ENCODE measurements at regions of chr11 and their contacts with region 1.

Region 1: DNA sequence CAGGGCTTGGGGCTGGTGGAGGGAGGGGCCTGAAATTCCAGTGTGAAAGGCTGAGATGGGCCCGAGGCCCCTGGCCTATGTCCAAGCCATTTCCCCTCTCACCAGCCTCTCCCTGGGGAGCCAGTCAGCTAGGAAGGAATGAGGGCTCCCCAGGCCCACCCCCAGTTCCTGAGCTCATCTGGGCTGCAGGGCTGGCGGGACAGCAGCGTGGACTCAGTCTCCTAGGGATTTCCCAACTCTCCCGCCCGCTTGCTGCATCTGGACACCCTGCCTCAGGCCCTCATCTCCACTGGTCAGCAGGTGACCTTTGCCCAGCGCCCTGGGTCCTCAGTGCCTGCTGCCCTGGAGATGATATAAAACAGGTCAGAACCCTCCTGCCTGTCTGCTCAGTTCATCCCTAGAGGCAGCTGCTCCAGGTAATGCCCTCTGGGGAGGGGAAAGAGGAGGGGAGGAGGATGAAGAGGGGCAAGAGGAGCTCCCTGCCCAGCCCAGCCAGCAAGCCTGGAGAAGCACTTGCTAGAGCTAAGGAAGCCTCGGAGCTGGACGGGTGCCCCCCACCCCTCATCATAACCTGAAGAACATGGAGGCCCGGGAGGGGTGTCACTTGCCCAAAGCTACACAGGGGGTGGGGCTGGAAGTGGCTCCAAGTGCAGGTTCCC is at the start of gene APOC3:
- DNase-seq: no peak
- ATAC-seq: peak in 1 of 8 donors; percentile 7
- H3K4me3 ChIP-seq: no peak within 1 kb of the TSS
- H3K27ac ChIP-seq: no peak within 1 kb of the TSS
- H3K4me1 ChIP-seq: peaks cover 0 to 6% (median 2%) of the 10 kb centered on the region in 9 donors
- H3K27me3 ChIP-seq: no peaks in the 10 kb centered on the region
- CTCF ChIP-seq: no peak
- total RNA-seq, gene APOC3: 0.64 TPM in 1 of 10 donors, not detected in the others

Region 2: DNA sequence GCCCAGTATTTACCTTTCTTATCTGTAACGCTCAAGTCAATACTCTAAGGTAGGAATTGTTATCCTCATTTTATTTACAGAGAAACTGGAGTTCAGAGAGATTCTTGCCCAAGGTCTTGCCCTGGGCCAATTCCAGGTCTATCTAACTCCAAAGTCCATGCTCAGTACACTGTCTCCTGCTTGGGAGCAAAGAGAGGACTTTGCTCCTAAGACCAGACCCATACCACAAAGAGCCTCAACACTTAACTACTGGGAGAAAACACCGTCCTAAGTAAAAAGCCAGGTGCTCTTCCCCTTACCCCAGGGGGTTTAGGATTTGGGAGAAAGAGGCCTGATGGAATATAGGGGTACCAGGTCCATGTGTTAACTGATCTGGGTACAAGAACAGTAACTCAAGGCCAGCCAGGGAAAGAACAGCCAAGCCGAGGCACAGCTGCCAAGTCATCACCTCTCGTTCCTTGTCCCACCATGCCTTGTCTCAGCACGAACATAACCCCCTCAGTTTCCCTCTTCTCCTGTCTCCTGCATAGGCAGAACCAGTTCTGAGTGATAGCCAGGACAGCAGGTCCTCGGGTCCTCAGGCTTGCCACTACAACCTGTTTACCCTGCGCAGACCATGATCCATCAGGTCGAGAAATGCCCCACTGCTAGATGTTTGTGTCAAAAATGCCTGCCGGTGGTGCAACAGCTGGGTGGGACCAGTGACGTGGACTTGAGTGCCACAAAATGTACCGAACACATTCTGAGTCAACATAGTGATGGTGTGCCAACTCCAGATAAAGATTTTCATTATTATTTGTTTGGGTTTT is 21.1 kb before region 1 on chr11:
- intact Hi-C with region 1: loop called in 1 of 10 experiments (anchors 1 kb)
- DNase-seq: no peak
- ATAC-seq: peak in 1 of 8 donors; percentile 37
- H3K4me3 ChIP-seq: no peak overlapping the region
- H3K27ac ChIP-seq: no peak overlapping the region
- H3K4me1 ChIP-seq: peaks cover 0 to under 1% (median 0%) of the 10 kb centered on the region in 9 donors
- H3K27me3 ChIP-seq: no peaks in the 10 kb centered on the region
- CTCF ChIP-seq: no peak

Measured in heart right ventricle (tissue), 16 donors.